ENCODE measurements at regions of chr1 and their contacts with region 1.

Region 1: DNA sequence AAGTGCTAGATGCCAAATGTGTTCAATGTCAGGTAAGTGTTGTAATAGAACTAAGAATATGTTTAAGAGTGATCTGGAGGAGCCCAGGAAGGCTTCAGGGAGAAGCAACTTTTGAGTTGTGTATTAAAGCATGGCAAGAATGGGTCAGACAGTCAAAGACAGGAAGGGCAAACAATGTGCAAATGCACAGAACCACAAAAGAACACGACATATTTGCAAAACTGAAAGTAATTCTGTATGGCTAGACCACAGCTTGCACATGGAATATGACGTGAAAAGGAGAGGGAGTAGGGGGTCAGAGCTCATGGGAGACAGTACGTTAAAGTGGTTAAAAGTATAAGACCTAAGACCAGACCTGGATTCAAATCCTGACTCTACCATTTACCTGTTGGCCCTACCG is 7.1 kb upstream of the SORT1 start:
- DNase-seq: no peak
- ATAC-seq: no peak
- H3K4me3 ChIP-seq: no peak overlapping the region
- H3K27ac ChIP-seq: no peak overlapping the region
- H3K4me1 ChIP-seq: peaks cover 0 to 8% (median 2%) of the 10 kb centered on the region in 12 donors
- H3K27me3 ChIP-seq: no peaks in the 10 kb centered on the region
- CTCF ChIP-seq: no peak
- POLR2A ChIP-seq: no peak

Region 2: DNA sequence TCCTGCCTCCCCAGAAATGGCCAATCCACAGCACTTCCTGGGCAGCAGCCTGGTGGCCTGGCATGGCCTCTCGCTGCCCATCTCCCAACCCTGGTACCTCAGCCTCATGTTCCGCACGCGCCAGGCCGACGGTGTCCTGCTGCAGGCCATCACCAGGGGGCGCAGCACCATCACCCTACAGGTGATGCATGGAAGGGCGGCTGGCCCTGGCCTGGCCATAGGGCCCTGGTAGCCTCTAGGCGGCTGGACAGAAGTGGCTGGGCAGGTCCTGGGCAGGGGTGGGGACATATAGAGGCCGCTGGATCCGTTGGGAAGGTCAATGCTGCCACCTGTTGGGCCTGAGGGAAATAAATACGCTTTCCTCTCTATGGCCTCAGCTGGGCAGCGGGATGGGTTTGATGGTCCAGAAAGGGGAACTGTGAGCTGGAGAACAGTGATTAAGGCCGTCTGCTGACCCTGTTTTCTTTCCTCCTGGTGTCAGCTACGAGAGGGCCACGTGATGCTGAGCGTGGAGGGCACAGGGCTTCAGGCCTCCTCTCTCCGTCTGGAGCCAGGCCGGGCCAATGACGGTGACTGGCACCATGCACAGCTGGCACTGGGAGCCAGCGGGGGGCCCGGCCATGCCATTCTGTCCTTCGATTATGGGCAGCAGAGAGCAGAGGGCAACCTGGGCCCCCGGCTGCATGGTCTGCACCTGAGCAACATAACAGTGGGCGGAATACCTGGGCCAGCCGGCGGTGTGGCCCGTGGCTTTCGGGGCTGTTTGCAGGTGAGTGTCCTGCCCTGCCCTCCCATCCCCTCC is 141.0 kb before region 1 on chr1:
- intact Hi-C with region 1: loop called in 3 of 10 experiments (anchors 5 kb)
- DNase-seq: peak; percentile 75 to 89 (median 83)
- ATAC-seq: peak; percentile 80 to 88 (median 87)
- H3K4me3 ChIP-seq: no peak overlapping the region
- H3K27ac ChIP-seq: no peak overlapping the region
- H3K4me1 ChIP-seq: peaks cover 0 to 9% (median 0%) of the 10 kb centered on the region in 12 donors
- H3K27me3 ChIP-seq: no peaks in the 10 kb centered on the region
- CTCF ChIP-seq: peak; percentile 81 to 95 (median 88)
- POLR2A ChIP-seq: no peak

Measured in heart left ventricle (tissue), 16 donors.